ENCODE measurements at regions of chr1 and their contacts with region 1.

Region 1: GRCh38 chr1:16371725-16372124 is 4.7 kb downstream of the SZRD1 start:
- DNase-seq: no peak
- H3K4me3 ChIP-seq: no peak overlapping the region
- H3K27ac ChIP-seq: peak overlapping the region; percentile 7
- H3K4me1 ChIP-seq: peaks cover 87% of the 10 kb centered on the region
- H3K27me3 ChIP-seq: no peaks in the 10 kb centered on the region
- CTCF ChIP-seq: no peak

Region 2: GRCh38 chr1:16315437-16315836 is 56.3 kb before region 1 on chr1:
- intact Hi-C with region 1: no loop called
- DNase-seq: no peak
- H3K4me3 ChIP-seq: no peak overlapping the region
- H3K27ac ChIP-seq: no peak overlapping the region
- H3K4me1 ChIP-seq: peaks cover 66% of the 10 kb centered on the region
- H3K27me3 ChIP-seq: no peaks in the 10 kb centered on the region
- CTCF ChIP-seq: no peak

Region 3: DNA sequence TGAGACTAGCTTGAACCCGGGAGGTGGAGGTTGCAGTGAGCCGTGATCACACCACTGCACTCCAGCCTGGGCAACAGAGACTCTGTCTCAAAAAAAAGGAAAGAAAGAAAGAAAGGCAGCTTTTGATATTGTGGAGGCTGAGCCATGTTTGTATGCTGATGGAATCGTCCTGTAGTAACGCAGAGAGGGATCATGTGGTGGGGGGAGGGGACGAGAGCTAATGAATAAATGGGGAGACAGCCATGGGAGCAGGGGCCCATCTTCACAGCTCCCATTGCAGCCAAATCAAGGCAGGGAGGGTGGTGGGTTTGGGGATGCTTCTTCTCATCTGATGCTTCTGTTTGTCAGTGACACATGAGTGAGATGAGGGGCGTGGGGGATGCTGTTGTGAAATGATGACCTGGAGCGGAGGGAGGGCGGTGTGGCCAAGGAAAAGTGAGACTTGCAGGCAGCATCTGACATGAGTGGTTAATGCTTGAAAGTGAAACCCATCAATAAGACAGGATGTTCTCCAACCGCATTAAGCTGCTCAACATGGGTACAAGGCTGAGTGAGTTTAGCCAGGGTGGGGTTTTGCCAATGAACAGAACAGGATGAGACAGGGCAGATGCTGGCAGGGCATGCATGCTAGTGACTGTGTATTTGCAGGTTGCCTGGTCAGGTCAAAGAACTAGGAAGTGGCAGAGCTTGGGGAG is 48.8 kb after region 1 on chr1:
- intact Hi-C with region 1: loop called (anchors 10 kb)
- DNase-seq: no peak
- H3K4me3 ChIP-seq: no peak overlapping the region
- H3K27ac ChIP-seq: no peak overlapping the region
- H3K4me1 ChIP-seq: no peaks in the 10 kb centered on the region
- H3K27me3 ChIP-seq: peaks cover 13% of the 10 kb centered on the region
- CTCF ChIP-seq: no peak

Measured in left ventricle myocardium inferior (tissue), 1 donor.